GM12878 (cell line): ENCODE measurements at regions of chr7 and their contacts with region 1.

Region 1: DNA sequence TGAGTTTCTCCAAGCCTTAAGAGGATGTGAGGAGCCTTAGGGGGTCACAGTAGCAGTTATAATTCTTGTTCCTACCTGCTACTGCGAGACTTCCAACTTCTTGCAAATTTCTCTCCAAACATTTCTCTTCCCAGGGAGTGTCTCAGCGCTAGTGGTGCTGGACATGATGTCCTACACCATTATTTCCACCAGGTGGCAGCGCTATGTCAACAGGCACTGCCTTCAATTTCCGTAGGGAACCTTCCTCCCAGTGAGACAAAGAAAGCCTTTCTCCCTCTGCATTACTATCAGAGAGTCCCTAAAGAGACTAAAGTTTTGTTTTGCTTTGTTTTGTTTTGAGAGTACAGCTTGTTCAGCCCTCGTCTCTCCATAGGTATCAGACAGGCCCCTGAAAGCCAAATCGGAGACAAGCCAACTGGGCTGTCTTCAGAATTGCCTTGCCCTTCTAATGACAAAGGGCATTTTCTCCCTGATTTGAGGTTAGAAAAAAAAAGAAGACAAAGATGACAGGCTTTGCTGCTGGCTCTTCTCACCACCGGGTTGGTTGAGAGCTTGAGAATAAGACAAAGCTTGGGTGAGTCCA is 44.2 kb upstream of the GGCT start:
- DNase-seq: no peak
- ATAC-seq: peak; percentile 82
- H3K4me3 ChIP-seq: no peak overlapping the region
- H3K27ac ChIP-seq: no peak overlapping the region
- H3K4me1 ChIP-seq: peaks cover 4% of the 10 kb centered on the region; the same call in 1 of the 2 replicates
- H3K27me3 ChIP-seq: no peaks in the 10 kb centered on the region
- CTCF ChIP-seq: peak; percentile 69 to 81 (median 76)
- EP300 ChIP-seq: no peak
- POLR2A ChIP-seq: no peak
- RAD21 ChIP-seq: peak; percentile 50

Region 2: DNA sequence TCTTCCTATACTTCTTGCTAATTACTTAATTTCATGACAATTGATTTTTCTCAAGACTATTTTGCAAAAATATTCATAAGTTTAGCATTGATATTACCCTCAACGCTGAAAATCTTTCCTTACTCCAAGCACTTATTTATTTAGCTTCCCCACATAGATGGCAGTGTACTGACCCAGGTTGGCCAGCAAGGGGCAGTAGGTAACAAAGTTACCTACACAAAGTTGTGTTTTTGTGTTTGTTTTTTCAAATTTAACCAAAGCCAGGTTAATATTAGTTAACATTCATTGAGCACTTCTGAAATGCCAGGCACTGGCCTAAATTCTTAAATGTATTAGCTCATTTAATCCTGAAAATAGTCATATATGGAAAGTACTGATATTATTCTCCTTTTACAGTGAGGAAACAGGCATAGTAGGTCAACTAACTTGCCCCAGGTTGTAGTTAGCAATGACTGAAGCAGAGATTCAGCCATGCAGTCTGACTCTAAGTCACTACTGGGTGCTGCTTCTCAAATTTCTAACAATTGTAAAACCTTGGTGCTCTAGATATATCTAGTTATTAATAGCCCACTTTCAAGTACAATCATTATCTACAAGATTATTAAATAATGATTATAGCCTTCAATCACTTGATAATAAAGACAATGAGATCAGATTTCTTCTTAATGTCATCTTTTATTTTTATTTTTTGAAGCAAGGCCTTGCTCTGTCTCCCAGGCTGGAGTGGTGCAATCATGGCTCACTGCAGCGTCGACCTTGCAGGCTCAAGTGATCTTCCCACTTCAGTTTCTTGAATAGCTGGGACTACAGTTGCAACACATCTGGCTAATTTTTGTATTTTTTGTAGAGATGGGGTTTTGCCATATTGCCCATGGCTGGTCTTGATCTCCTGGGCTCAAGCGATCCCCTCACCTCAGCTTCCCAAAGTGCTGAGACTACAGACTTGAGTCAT is 38.5 kb before region 1 on chr7:
- CTCF ChIA-PET with region 1: interaction called, 42 read pairs
- POLR2A ChIA-PET with region 1: no interaction called
- RAD21 ChIA-PET with region 1: interaction called, 3 read pairs
- SMC1A ChIA-PET with region 1: interaction called, 15 read pairs
- in situ Hi-C with region 1: no loop called
- intact Hi-C with region 1: no loop called
- DNase-seq: no peak
- ATAC-seq: peak; percentile 85
- H3K4me3 ChIP-seq: no peak overlapping the region
- H3K27ac ChIP-seq: no peak overlapping the region
- H3K4me1 ChIP-seq: no peaks in the 10 kb centered on the region
- H3K27me3 ChIP-seq: no peaks in the 10 kb centered on the region
- CTCF ChIP-seq: peak; percentile 67 to 85 (median 82)
- EP300 ChIP-seq: no peak
- POLR2A ChIP-seq: no peak
- RAD21 ChIP-seq: peak; percentile 75

Region 3: DNA sequence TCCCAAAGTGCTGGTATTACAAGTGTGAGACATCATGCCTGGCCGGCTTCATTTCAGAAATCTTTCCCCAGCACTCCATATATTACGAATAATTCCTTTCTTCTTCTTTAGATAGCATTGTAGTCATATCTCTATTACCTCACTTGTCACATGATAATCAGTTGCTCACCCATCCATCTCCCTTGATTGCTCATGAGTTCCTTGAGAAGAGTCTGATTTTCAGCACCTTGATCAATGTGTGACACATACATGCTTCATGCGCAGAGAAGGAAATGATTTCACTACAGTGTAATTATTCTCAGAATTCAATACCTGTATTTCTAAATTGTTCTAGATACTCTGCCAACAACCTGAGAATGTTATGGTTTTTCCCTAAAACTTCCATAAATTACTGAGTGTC is 17.6 kb before region 1 on chr7:
- CTCF ChIA-PET with region 1: interaction called, 15 read pairs
- POLR2A ChIA-PET with region 1: no interaction called
- RAD21 ChIA-PET with region 1: no interaction called
- SMC1A ChIA-PET with region 1: no interaction called
- in situ Hi-C with region 1: no loop called
- intact Hi-C with region 1: no loop called
- DNase-seq: no peak
- ATAC-seq: no peak
- H3K4me3 ChIP-seq: no peak overlapping the region
- H3K27ac ChIP-seq: no peak overlapping the region
- H3K4me1 ChIP-seq: no peaks in the 10 kb centered on the region
- H3K27me3 ChIP-seq: no peaks in the 10 kb centered on the region
- CTCF ChIP-seq: no peak
- EP300 ChIP-seq: no peak
- POLR2A ChIP-seq: no peak
- RAD21 ChIP-seq: no peak

Region 4: GRCh38 chr7:30625283-30625682 is 76.4 kb after region 1 on chr7:
- CTCF ChIA-PET with region 1: no interaction called
- POLR2A ChIA-PET with region 1: no interaction called
- RAD21 ChIA-PET with region 1: no interaction called
- SMC1A ChIA-PET with region 1: no interaction called
- in situ Hi-C with region 1: no loop called
- intact Hi-C with region 1: no loop called
- DNase-seq: no peak
- ATAC-seq: no peak
- H3K4me3 ChIP-seq: no peak overlapping the region
- H3K27ac ChIP-seq: no peak overlapping the region
- H3K4me1 ChIP-seq: no peaks in the 10 kb centered on the region
- H3K27me3 ChIP-seq: no peaks in the 10 kb centered on the region
- CTCF ChIP-seq: no peak
- EP300 ChIP-seq: no peak
- POLR2A ChIP-seq: no peak
- RAD21 ChIP-seq: 0 out of 2 replicates have a peak, but pooled peaks have one; percentile 3